Ascending aorta (tissue), 2 donors: ENCODE measurements at regions of chr1 and their contacts with region 1.

Region 1: GRCh38 chr1:53860967-53861411 is 22.9 kb upstream of the NDC1 start:
- DNase-seq: no peak
- H3K4me3 ChIP-seq: no peak overlapping the region
- H3K27ac ChIP-seq: no peak overlapping the region
- H3K4me1 ChIP-seq: no peaks in the 10 kb centered on the region
- H3K27me3 ChIP-seq: no peaks in the 10 kb centered on the region
- CTCF ChIP-seq: peak; percentile 47 to 67 (median 57)

Region 2: DNA sequence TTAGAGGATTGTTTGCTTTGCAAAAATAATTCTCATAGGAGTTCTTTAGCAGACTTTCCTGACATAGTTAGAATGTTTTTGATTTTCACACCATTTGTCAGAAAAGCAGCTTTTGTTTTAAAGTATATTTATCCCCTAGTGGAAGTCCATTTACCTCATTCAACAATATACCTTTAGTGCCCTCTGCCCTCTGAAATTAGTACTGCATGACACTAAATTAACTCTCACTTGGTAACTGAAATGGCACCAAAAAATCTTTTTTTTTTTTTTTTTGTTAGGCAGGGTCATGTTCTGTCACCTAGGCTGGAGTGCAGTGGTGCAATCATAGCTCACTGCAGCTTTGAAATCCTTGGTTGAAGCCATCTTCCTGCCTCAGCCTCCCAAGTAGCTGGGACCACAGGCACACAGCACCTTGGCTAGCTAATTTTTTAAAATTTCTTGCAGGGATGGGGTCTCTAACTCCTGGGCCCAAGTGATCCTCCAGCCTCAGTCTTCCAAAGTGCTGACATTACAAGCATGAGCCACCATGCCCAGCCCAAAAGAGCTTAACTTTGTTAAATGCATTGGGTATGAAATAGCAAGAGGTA is 98.8 kb after region 1 on chr1:
- intact Hi-C with region 1: loop called (anchors 5 kb)
- DNase-seq: no peak
- H3K4me3 ChIP-seq: no peak overlapping the region
- H3K27ac ChIP-seq: no peak overlapping the region
- H3K4me1 ChIP-seq: no peaks in the 10 kb centered on the region
- H3K27me3 ChIP-seq: no peaks in the 10 kb centered on the region
- CTCF ChIP-seq: peak in 2 of 3 experiments; percentile 32 to 47

Region 3: DNA sequence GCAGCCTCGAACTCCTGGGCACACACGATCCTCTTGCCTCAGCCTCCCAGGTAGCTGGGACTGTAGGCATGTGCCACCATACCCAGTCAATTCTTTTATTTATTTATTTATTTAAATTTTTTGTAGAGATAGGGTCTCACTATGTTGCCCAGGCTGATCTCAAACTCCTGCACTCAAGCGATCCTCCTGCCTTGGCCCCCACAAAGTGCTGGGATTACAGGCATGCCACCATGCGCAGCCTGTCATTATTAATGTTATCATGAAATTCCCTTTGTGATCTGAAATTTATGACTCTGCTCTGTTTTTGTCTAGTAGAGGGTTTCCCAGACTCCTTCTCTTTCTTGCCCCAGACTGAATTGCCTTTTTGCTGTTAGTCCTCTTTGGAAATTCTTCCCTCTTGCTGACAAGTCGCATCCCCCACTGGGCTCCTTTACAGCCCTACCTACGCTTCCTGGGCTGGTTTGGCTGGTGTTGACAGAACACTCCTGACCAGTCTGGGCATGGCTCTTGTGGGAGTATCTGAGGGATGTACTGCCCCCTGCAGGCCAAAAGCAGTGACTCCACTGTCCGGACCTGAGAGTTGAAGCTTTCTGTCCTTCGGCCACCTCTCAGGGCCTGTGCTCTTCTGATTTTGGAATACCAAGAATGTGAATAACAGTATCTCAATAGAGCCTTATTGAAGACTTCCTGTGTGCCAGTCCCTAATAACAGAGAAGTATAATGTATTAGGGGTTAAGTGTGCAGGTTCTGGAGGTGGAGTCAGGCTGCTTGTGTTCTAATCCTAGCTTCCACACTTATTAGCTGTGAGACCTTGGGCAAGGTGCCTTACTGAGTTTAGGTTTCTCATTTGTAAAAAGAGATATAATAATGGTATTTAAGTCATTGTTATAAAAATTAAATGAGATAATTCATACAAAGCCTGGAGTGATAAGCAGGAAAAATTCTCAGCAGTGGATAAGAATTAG is 220.6 kb after region 1 on chr1:
- intact Hi-C with region 1: loop called (anchors 5 kb)
- DNase-seq: peak in 1 of 2 donors; percentile 70
- H3K4me3 ChIP-seq: no peak overlapping the region
- H3K27ac ChIP-seq: no peak overlapping the region
- H3K4me1 ChIP-seq: no peaks in the 10 kb centered on the region
- H3K27me3 ChIP-seq: no peaks in the 10 kb centered on the region
- CTCF ChIP-seq: peak in 2 of 3 experiments; percentile 36 to 53